AG04450 (cell line): ENCODE measurements at regions of chr4 and their contacts with region 1.

Region 1: DNA sequence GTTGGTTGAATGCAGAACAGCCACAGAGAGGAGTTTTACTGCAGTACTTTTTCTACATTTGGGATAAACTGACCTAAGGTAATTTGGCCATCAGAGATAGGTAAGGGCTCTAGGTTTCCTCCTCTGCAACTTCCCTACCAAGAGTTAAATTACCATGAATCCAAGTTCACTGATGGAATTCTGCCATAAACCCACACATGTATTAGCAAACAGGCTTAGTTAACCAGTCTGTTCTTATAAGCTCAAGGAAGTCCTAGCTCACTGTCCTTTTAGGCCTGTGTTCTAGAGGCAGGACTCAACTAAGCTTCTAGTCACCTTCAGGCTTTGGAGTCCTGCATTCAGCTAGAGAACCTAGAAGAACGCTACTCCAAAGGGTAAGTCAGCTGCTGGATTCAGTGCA is 4.0 kb downstream of the FAM114A1 start:
- DNase-seq: no peak
- H3K4me3 ChIP-seq: no peak overlapping the region
- H3K27ac ChIP-seq: no peak overlapping the region
- H3K27me3 ChIP-seq: no peaks in the 10 kb centered on the region
- CTCF ChIP-seq: no peak

Region 2: DNA sequence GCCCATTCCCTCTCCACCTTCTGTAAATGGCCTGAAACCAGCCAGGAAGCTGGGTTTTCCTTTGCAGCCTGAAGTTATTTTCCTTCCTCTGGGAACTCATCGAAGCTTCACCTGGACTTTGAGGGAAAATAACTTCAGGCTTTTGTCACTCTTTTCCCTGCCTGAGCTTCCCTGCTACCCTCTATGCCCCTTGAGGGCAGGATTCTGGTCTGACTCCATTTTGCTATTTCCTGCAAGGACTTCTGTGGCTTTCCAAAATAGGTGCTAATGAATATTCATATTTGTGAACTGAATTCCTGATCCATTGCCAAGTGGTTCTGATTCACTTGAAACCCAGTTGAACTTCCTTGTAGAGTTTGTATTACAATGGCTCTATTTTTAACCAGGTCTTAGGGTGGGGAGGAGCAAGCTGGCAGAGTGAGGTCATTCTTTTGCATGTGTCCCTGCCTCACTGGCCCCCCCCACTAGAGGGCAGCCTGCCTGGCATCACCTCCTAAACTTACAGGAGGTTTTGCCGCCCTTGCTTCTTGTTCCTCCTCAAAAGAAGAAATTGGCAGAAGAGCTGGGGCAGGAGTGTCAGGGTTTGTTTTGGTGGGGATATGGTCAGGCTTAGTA is 901.0 kb before region 1 on chr4:
- CTCF ChIA-PET with region 1: no interaction called
- POLR2A ChIA-PET with region 1: interaction called, 10 read pairs
- DNase-seq: no peak
- H3K4me3 ChIP-seq: no peak overlapping the region
- H3K27ac ChIP-seq: no peak overlapping the region
- H3K27me3 ChIP-seq: no peaks in the 10 kb centered on the region
- CTCF ChIP-seq: peak; percentile 36

Region 3: GRCh38 chr4:38837849-38838248 is 33.7 kb before region 1 on chr4:
- CTCF ChIA-PET with region 1: interaction called, 10 read pairs
- POLR2A ChIA-PET with region 1: no interaction called
- DNase-seq: no peak
- H3K4me3 ChIP-seq: no peak overlapping the region
- H3K27ac ChIP-seq: no peak overlapping the region
- H3K27me3 ChIP-seq: no peaks in the 10 kb centered on the region
- CTCF ChIP-seq: no peak

Region 4: GRCh38 chr4:38993694-38994093 is 122.1 kb after region 1 on chr4:
- CTCF ChIA-PET with region 1: no interaction called
- POLR2A ChIA-PET with region 1: no interaction called
- DNase-seq: no peak
- H3K4me3 ChIP-seq: no peak overlapping the region
- H3K27ac ChIP-seq: no peak overlapping the region
- H3K27me3 ChIP-seq: no peaks in the 10 kb centered on the region
- CTCF ChIP-seq: peak; percentile 27; the same call in 1 of the 2 replicates